ENCODE measurements at regions of chr1 and their contacts with region 1.

Region 1: DNA sequence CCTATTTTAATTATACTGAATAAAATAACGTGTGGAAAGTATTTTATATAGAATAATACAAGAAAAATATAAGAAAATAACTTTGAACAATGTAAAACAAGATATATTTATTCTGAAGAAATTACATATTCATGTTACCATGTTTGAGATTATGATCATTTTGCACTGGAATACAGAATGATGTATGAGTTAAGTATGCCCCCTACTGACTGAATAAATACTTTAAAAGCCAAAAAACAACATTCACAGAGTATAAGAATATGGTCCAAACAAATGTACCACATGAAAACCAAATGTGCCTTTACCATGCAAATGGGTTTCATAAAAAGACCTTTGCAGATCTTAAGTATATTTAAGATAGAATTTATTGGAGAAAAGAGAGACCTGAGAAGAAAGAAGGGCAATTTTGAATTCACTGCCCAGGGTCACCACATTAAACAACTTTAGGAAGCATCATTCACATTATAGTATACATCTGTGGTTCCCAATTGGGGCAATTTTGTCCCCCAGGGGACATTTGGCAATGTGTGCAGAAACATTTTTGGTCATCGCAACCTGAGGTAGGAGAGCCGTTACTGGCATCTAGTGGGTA is 136.6 kb upstream of the GFI1 start:
- DNase-seq: peak; percentile 12
- ATAC-seq: peak; percentile 60; the same call in 1 of the 2 replicates
- H3K4me3 ChIP-seq: no peak overlapping the region
- H3K27ac ChIP-seq: no peak overlapping the region
- H3K4me1 ChIP-seq: no peaks in the 10 kb centered on the region
- H3K27me3 ChIP-seq: no peaks in the 10 kb centered on the region
- CTCF ChIP-seq: peak; percentile 45
- POLR2A ChIP-seq: no peak
- RAD21 ChIP-seq: peak; percentile 51

Region 2: GRCh38 chr1:92016720-92017316 is 606.5 kb before region 1 on chr1:
- CTCF ChIA-PET with region 1: no interaction called
- POLR2A ChIA-PET with region 1: no interaction called
- dilution Hi-C with region 1: no loop called
- in situ Hi-C with region 1: loop called (anchors 25 kb)
- intact Hi-C with region 1: no loop called
- DNase-seq: no peak
- ATAC-seq: no peak
- H3K4me3 ChIP-seq: no peak overlapping the region
- H3K27ac ChIP-seq: no peak overlapping the region
- H3K4me1 ChIP-seq: no peaks in the 10 kb centered on the region
- H3K27me3 ChIP-seq: no peaks in the 10 kb centered on the region
- CTCF ChIP-seq: no peak
- POLR2A ChIP-seq: no peak
- RAD21 ChIP-seq: no peak

Region 3: GRCh38 chr1:92310185-92310597 is 313.1 kb before region 1 on chr1:
- CTCF ChIA-PET with region 1: no interaction called
- POLR2A ChIA-PET with region 1: no interaction called
- dilution Hi-C with region 1: no loop called
- in situ Hi-C with region 1: loop called (anchors 5 kb)
- intact Hi-C with region 1: loop called (anchors 2 kb)
- DNase-seq: peak; percentile 50
- ATAC-seq: peak; percentile 66
- H3K4me3 ChIP-seq: no peak overlapping the region
- H3K27ac ChIP-seq: no peak overlapping the region
- H3K4me1 ChIP-seq: no peaks in the 10 kb centered on the region
- H3K27me3 ChIP-seq: no peaks in the 10 kb centered on the region
- CTCF ChIP-seq: peak; percentile 65
- POLR2A ChIP-seq: no peak
- RAD21 ChIP-seq: peak; percentile 64

Region 4: GRCh38 chr1:92638498-92638897 is 15.2 kb after region 1 on chr1:
- CTCF ChIA-PET with region 1: no interaction called
- POLR2A ChIA-PET with region 1: no interaction called
- dilution Hi-C with region 1: no loop called
- in situ Hi-C with region 1: no loop called
- intact Hi-C with region 1: no loop called
- DNase-seq: no peak
- ATAC-seq: no peak
- H3K4me3 ChIP-seq: no peak overlapping the region
- H3K27ac ChIP-seq: no peak overlapping the region
- H3K4me1 ChIP-seq: no peaks in the 10 kb centered on the region
- H3K27me3 ChIP-seq: no peaks in the 10 kb centered on the region
- CTCF ChIP-seq: no peak
- POLR2A ChIP-seq: no peak
- RAD21 ChIP-seq: no peak

Measured in IMR-90 (cell line).